ENCODE measurements at regions of chr17 and their contacts with region 1.

Region 1: GRCh38 chr17:49707608-49708514 is at the start of gene SLC35B1:
- DNase-seq: peak; percentile 100
- H3K4me3 ChIP-seq: peak within 1 kb of the TSS; percentile 69
- H3K4me3 Mint-ChIP-seq: peak within 1 kb of the TSS; percentile 89
- H3K27ac Mint-ChIP-seq: peak within 1 kb of the TSS; percentile 99
- H3K4me1 ChIP-seq: peaks cover 8% of the 10 kb centered on the region
- H3K4me1 Mint-ChIP-seq: peaks cover 28% of the 10 kb centered on the region
- H3K27me3 ChIP-seq: no peaks in the 10 kb centered on the region
- H3K27me3 Mint-ChIP-seq: no peaks in the 10 kb centered on the region
- CTCF ChIP-seq: peak; percentile 82 to 100
- total RNA-seq, gene SLC35B1: 228 and 232 TPM in 2 replicates

Region 2: GRCh38 chr17:49687878-49688491 is 19.9 kb before region 1 on chr17:
- CTCF ChIA-PET with region 1: interaction called, 11 read pairs
- POLR2A ChIA-PET with region 1: no interaction called
- intact Hi-C with region 1: no loop called
- DNase-seq: peak in 1 of 2 experiments; percentile 38
- H3K4me3 ChIP-seq: no peak overlapping the region
- H3K4me3 Mint-ChIP-seq: no peak overlapping the region
- H3K27ac Mint-ChIP-seq: no peak overlapping the region
- H3K4me1 ChIP-seq: peaks cover 5% of the 10 kb centered on the region
- H3K4me1 Mint-ChIP-seq: peaks cover 7% of the 10 kb centered on the region
- H3K27me3 ChIP-seq: no peaks in the 10 kb centered on the region
- H3K27me3 Mint-ChIP-seq: peaks cover 7% of the 10 kb centered on the region
- CTCF ChIP-seq: no peak

Region 3: DNA sequence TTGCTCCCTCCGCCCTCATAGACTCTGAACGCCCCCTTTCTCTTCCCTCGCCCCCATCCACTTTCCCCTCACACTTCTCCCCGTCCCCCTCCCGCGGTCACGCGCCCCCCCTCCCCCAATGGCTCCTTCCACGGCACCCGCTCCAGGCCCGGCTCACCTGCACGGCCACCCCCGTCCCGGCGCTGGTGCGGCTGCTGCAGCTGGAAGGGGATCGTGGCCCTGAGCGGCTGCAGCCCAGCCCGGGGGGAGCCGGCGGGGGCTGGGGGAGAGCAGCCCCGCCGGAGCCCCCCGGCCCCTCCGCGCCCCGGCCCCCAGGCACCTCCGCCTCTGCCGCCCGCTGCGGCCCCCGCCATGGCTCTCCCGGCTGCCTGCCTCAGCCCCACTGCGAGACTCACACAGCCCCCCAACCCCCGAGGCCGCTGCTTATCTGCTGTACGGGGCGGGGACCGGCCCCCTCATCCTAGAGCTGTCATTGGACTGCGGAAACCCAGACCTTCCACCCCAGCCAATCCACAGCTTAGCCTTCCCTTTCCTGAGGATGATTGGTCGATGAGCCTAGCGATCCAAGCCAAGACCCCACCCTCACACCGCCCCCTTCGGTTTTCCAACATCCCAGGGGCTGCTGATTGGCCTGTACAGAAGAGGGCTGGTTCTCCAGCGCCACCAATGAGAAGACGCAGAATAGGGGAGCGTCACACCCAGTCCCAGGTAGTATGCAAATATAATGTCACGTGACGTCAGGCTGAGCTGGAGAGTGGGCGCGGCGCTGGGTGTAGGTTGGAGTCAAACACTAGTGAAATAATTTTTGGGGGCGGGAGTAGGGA is 56.1 kb after region 1 on chr17 and contains the start of gene FAM117A:
- CTCF ChIA-PET with region 1: interaction called, 36 read pairs
- POLR2A ChIA-PET with region 1: interaction called, 50 read pairs
- intact Hi-C with region 1: loop called (anchors 1 kb)
- DNase-seq: peak; percentile 100
- H3K4me3 ChIP-seq: peak within 1 kb of the TSS; percentile 76
- H3K4me3 Mint-ChIP-seq: peak within 1 kb of the TSS; percentile 98
- H3K27ac Mint-ChIP-seq: peak within 1 kb of the TSS; percentile 81
- H3K4me1 ChIP-seq: peaks cover 9% of the 10 kb centered on the region
- H3K4me1 Mint-ChIP-seq: peaks cover 8% of the 10 kb centered on the region
- H3K27me3 ChIP-seq: 0 out of 2 replicates have a peak, but pooled peaks cover 1% of the 10 kb centered on the region
- H3K27me3 Mint-ChIP-seq: peaks cover 13% of the 10 kb centered on the region
- CTCF ChIP-seq: no peak
- total RNA-seq, gene FAM117A: 36.8 and 41.5 TPM in 2 replicates

Region 4: DNA sequence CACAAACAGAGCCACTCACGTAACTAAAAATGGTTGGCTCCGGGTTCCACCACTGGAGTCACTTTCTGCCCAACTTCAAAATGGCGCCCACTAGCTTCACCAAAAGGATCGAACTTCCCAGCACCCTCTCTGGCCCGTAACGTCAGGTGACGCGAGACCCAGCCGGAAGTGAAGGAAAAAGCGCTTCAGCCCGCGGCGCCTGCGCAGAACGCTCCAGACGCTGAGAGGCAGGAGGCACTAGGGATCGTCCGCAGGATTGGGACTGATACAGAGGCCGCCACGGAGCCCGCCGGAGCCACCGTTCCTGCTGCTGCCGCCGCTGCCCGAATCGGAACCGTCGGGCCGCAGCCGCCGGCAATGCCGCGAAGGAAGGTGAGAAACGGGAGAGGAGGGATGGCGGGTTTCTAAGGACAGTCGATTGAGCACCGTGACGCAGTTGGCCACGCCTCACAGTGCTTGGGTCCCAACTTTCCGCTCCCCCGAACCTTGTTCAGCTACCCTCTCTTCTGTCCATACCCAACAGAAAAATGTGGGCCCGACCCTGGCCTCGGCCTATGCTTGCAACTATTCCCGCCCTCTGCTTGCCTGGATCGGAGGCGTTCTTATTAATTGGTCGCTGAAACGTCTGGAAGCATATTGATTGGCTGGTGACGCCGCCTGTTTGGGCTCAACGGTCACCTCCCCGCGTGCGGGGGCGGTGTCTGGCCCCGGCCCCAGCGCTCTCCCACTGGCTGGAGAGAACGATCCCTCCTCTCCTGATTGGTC is 80.8 kb after region 1 on chr17 and contains the start of gene KAT7:
- CTCF ChIA-PET with region 1: interaction called, 6 read pairs
- POLR2A ChIA-PET with region 1: interaction called, 17 read pairs
- intact Hi-C with region 1: loop called (anchors 1 kb)
- DNase-seq: peak; percentile 100
- H3K4me3 ChIP-seq: peak within 1 kb of the TSS; percentile 78
- H3K4me3 Mint-ChIP-seq: peak within 1 kb of the TSS; percentile 90
- H3K27ac Mint-ChIP-seq: peak within 1 kb of the TSS; percentile 96
- H3K4me1 ChIP-seq: peaks cover 13% of the 10 kb centered on the region
- H3K4me1 Mint-ChIP-seq: peaks cover 21% of the 10 kb centered on the region
- H3K27me3 ChIP-seq: no peaks in the 10 kb centered on the region
- H3K27me3 Mint-ChIP-seq: peaks cover 4% of the 10 kb centered on the region
- CTCF ChIP-seq: peak in 1 of 2 experiments; percentile 31
- total RNA-seq, gene KAT7: 131 and 137 TPM in 2 replicates

Region 5: DNA sequence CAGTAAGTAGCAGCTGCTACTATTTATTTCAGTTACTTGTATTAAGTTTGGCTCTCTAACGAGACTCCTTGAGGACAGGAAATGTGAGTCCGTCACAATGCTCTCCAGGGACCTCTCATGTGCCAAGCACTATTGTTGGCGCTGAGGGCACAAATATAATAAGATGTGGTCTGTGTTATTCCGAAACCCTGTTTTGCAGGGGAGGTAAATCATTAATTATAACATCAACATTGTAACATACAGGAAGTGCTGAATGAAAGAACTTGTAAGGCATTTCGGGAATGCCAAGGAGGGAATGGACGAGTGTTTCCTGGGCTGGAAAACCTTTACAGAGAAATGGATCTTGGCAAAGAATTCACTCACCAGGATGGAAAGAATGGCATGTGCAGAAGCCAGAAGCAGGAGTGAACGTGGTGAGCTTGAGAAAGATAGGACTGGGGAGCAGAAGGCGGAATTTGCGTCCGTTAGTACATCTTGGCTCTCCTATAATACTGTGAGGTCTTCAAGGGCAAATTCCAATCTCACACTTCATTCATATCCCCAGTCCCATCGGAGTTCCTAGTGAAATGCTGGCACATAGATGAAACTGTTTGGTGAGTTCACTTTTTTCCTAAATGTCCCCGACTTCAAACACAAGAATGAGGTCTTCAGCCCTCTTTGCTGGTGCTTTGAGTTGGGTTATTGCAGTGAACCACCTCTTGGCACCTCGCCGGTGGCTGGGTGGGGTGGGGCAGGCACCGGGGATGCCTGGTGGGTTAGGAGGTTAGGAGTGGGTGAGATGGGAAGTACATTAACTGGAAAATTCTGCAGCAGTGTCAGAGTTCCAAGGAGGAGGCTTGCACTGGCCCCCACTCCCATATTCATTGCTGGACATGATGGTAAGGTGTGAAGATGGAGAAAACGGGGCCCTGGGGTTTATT is 128.5 kb after region 1 on chr17:
- CTCF ChIA-PET with region 1: no interaction called
- POLR2A ChIA-PET with region 1: no interaction called
- intact Hi-C with region 1: no loop called
- DNase-seq: peak; percentile 67 to 74
- H3K4me3 ChIP-seq: no peak overlapping the region
- H3K4me3 Mint-ChIP-seq: peak overlapping the region; percentile 69
- H3K27ac Mint-ChIP-seq: peak overlapping the region; percentile 78
- H3K4me1 ChIP-seq: peaks cover 29% of the 10 kb centered on the region
- H3K4me1 Mint-ChIP-seq: peaks cover 31% of the 10 kb centered on the region
- H3K27me3 ChIP-seq: no peaks in the 10 kb centered on the region
- H3K27me3 Mint-ChIP-seq: no peaks in the 10 kb centered on the region
- CTCF ChIP-seq: no peak